ENCODE measurements at regions of chr1 and their contacts with region 1.

Region 1: DNA sequence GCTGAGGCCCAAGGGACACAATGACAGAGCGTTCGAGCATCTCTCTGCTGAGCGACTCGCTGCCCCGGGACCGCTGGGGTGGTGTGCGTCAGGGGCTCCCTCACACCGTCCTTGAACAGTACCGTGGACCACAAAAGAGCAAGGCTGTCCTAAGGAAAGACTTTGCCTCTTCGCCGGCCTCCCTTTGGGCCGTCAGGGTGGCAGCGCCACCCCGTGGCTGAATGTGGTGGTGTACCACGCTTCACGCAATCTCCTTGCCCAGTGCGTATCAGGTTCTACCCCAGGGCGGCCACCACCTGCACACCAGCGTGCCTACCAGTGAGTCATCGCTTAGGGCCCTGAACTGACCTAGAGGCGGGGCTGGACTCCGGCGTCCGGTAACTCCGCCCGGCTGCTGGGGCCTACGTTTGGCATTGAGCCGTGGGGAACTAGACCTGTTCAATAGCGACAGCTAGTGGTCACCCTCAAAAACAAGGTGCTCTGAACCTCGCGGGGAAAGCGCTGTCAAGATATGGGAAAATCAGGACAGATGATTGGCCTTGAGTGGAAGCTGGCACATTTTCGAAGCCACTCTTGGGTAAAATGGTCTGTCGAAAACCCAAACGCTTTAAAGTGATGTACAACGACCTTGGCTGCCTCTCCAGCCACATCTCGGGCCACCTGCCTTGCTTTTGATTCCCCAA is 8.1 kb upstream of the TRAF3IP3 start:
- DNase-seq: peak; percentile 99
- ATAC-seq: peak; percentile 99
- H3K4me3 ChIP-seq: no peak overlapping the region
- H3K27ac ChIP-seq: 0 out of 2 replicates have a peak overlapping the region, but pooled peaks have one; percentile 6
- H3K4me1 ChIP-seq: peaks cover 24% of the 10 kb centered on the region
- H3K27me3 ChIP-seq: no peaks in the 10 kb centered on the region
- CTCF ChIP-seq: peak; percentile 97

Region 2: GRCh38 chr1:209534496-209535250 is 213.0 kb before region 1 on chr1:
- CTCF ChIA-PET with region 1: no interaction called
- POLR2A ChIA-PET with region 1: no interaction called
- intact Hi-C with region 1: no loop called
- DNase-seq: no peak
- ATAC-seq: no peak
- H3K4me3 ChIP-seq: no peak overlapping the region
- H3K27ac ChIP-seq: no peak overlapping the region
- H3K4me1 ChIP-seq: peaks cover 8% of the 10 kb centered on the region; the same call in 1 of the 2 replicates
- H3K27me3 ChIP-seq: no peaks in the 10 kb centered on the region
- CTCF ChIP-seq: peak; percentile 44; the same call in 1 of the 2 replicates

Region 3: GRCh38 chr1:209565759-209566678 is 181.7 kb before region 1 on chr1:
- CTCF ChIA-PET with region 1: interaction called, 4 read pairs
- POLR2A ChIA-PET with region 1: no interaction called
- intact Hi-C with region 1: loop called (anchors 1 kb)
- DNase-seq: peak; percentile 97
- ATAC-seq: peak; percentile 90
- H3K4me3 ChIP-seq: no peak overlapping the region
- H3K27ac ChIP-seq: no peak overlapping the region
- H3K4me1 ChIP-seq: peaks cover 22% of the 10 kb centered on the region
- H3K27me3 ChIP-seq: no peaks in the 10 kb centered on the region
- CTCF ChIP-seq: peak; percentile 96

Region 4: GRCh38 chr1:209576798-209577197 is 170.9 kb before region 1 on chr1:
- CTCF ChIA-PET with region 1: no interaction called
- POLR2A ChIA-PET with region 1: no interaction called
- intact Hi-C with region 1: loop called (anchors 1 kb)
- DNase-seq: peak; percentile 98
- ATAC-seq: peak; percentile 99
- H3K4me3 ChIP-seq: no peak overlapping the region
- H3K27ac ChIP-seq: no peak overlapping the region
- H3K4me1 ChIP-seq: peaks cover 12% of the 10 kb centered on the region
- H3K27me3 ChIP-seq: no peaks in the 10 kb centered on the region
- CTCF ChIP-seq: peak; percentile 99

Region 5: GRCh38 chr1:209627732-209628196 is 120.0 kb before region 1 on chr1:
- CTCF ChIA-PET with region 1: no interaction called
- POLR2A ChIA-PET with region 1: no interaction called
- intact Hi-C with region 1: loop called (anchors 5 kb)
- DNase-seq: peak; percentile 88
- ATAC-seq: peak; percentile 72
- H3K4me3 ChIP-seq: no peak overlapping the region
- H3K27ac ChIP-seq: no peak overlapping the region
- H3K4me1 ChIP-seq: no peaks in the 10 kb centered on the region
- H3K27me3 ChIP-seq: no peaks in the 10 kb centered on the region
- CTCF ChIP-seq: peak; percentile 98

Region 6: DNA sequence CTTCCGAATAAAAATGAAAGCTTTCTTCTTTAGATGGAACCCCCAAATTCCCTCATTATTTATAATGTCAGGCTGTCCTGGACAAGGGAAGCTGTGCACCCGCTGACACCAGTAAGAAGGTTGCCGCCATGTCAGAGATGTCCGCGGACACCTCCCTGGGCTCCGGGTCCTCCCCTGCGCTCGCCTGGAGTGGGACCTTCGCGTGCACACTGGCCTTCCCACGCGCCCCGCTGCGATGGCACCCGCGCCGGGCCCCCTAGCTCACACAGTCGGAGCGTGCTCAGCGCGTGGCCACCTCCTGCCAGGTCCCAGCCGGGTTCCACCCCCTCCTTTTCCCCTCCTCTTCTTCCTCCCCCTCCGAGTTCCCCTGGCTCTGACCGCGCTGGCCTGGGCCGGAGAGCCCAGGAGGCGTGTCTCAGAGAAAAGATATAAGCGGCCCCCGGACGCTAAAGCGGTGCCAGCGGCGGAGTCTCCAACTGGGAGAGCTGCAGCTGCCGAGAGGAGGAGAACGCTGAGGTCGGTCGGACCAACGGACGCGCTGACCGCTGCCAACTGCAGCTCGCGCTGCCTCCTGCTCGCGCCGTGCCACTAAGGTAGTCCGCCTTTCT is 72.7 kb before region 1 on chr1 and contains the start of gene G0S2:
- CTCF ChIA-PET with region 1: no interaction called
- POLR2A ChIA-PET with region 1: no interaction called
- intact Hi-C with region 1: no loop called
- DNase-seq: peak; percentile 96
- ATAC-seq: peak; percentile 75
- H3K4me3 ChIP-seq: peak within 1 kb of the TSS; percentile 71
- H3K27ac ChIP-seq: 0 out of 2 replicates have a peak within 1 kb of the TSS, but pooled peaks have one; percentile 0
- H3K4me1 ChIP-seq: peaks cover 55% of the 10 kb centered on the region
- H3K27me3 ChIP-seq: no peaks in the 10 kb centered on the region
- CTCF ChIP-seq: no peak
- total RNA-seq, gene G0S2: 620 and 723 TPM in 2 replicates

Measured in PC-3 (cell line).